ENCODE measurements at regions of chr5 and their contacts with region 1.

Region 1: GRCh38 chr5:74316064-74316679 is 324.4 kb downstream of the ENC1 start:
- DNase-seq: peak; percentile 88
- H3K4me3 Mint-ChIP-seq: no peak overlapping the region
- H3K27ac Mint-ChIP-seq: peak overlapping the region; percentile 97
- H3K4me1 Mint-ChIP-seq: peaks cover 35% of the 10 kb centered on the region
- H3K27me3 Mint-ChIP-seq: no peaks in the 10 kb centered on the region
- CTCF ChIP-seq: no peak

Region 2: DNA sequence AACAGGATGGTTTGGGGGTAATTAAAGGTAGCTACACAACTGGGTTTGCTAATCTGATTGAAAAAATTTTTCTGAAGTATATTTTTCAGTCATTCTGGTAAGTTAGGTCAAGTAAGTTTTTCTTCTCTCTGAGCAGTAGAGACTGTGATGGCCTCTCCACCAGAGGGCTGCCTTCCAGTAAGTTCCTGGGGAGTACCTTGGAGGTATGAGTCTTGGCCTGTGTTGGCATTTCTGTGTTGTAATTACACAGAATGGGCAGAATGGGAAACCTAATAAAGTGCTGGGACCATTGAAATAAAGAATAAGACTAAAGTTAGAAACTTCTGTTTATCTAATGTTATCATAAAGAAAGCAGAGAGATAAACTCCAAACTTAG is 259.4 kb before region 1 on chr5:
- CTCF ChIA-PET with region 1: no interaction called
- POLR2A ChIA-PET with region 1: no interaction called
- intact Hi-C with region 1: loop called (anchors 10 kb)
- DNase-seq: peak; percentile 52
- H3K4me3 Mint-ChIP-seq: no peak overlapping the region
- H3K27ac Mint-ChIP-seq: no peak overlapping the region
- H3K4me1 Mint-ChIP-seq: peaks cover 10% of the 10 kb centered on the region
- H3K27me3 Mint-ChIP-seq: no peaks in the 10 kb centered on the region
- CTCF ChIP-seq: peak; percentile 45

Region 3: GRCh38 chr5:74251141-74252035 is 64.8 kb before region 1 on chr5:
- CTCF ChIA-PET with region 1: no interaction called
- POLR2A ChIA-PET with region 1: interaction called, 3 read pairs
- intact Hi-C with region 1: loop called (anchors 10 kb)
- DNase-seq: peak; percentile 94
- H3K4me3 Mint-ChIP-seq: no peak overlapping the region
- H3K27ac Mint-ChIP-seq: peak overlapping the region; percentile 82
- H3K4me1 Mint-ChIP-seq: peaks cover 22% of the 10 kb centered on the region
- H3K27me3 Mint-ChIP-seq: no peaks in the 10 kb centered on the region
- CTCF ChIP-seq: no peak

Region 4: DNA sequence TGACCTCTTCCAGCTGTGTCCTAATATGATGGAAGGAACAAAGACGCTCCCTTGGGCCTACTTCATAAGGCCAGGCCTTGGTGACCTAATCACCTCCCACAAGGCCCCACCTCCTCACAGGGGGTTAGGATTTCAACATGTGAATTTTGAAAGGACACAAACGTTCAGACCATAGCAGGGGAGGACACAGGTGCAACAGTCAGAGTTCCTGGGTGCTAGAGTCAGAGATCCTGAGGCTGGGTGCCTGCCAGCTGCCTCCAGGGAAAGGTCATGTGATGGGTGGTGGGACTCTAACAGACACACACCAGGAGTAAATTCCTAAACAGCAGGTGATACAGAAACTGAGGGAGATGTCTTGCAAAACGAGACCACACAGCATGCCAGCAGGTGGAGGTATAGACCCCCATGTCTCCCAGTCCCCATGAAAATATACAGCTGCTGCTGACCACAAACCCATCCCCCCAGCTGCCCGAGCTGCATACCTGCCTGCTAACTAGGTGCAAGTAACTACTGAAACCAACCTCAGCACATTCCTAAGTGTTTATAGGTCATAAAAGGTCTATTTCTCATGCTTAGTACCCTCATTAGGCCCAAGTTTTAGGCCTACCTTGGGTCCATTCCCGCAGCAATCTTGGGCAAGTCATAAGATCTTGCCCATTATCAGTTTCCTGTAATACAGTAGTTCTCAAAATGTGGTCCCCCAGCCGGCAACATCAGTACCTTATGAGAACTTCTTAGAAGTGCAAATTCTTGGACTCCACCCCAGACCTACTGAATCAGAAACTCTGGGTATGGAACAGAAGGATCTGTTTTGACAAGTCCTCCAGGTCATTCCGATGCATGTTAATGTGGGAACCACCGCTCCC is 79.0 kb after region 1 on chr5:
- CTCF ChIA-PET with region 1: no interaction called
- POLR2A ChIA-PET with region 1: no interaction called
- intact Hi-C with region 1: loop called (anchors 10 kb)
- DNase-seq: peak; percentile 86
- H3K4me3 Mint-ChIP-seq: no peak overlapping the region
- H3K27ac Mint-ChIP-seq: peak overlapping the region; percentile 73
- H3K4me1 Mint-ChIP-seq: peaks cover 36% of the 10 kb centered on the region
- H3K27me3 Mint-ChIP-seq: no peaks in the 10 kb centered on the region
- CTCF ChIP-seq: no peak

Region 5: DNA sequence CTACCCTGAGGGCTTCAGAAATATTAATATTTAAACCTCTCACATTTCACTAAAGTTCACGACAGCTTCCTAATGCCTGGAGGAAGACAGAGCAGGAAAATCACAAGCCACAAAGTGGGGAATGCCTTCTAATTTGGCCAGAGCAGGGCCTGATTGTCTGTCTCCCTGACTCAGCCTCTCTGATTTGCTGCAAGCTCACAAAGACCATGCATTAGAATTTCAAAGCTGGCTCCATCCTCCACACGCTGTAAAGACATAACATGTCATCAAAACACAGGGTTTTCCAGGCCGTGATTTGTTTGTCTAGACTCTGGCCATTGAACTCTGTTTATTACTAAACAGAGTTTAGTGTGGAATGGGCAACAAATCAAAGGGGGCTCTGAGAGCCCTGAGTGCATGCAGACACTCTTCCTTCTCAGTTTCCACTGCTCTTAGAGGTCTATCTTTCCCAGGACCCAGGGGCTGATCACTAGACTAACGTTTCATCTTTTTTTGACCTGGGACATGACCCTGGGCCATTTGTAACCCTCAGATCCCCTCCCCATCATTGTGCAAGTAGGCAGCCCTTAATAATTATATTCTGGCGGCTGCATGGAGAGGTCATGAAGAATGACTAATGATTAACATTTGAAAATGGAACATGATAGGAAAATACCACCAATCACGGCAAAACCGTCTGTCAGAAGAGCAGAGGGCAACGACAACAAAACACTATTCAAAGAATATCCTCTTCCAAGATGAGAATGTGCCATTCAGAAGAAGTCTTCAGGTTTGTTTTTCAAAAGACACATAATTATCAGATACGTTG is 184.1 kb after region 1 on chr5:
- CTCF ChIA-PET with region 1: no interaction called
- POLR2A ChIA-PET with region 1: no interaction called
- intact Hi-C with region 1: no loop called
- DNase-seq: no peak
- H3K4me3 Mint-ChIP-seq: no peak overlapping the region
- H3K27ac Mint-ChIP-seq: no peak overlapping the region
- H3K4me1 Mint-ChIP-seq: no peaks in the 10 kb centered on the region
- H3K27me3 Mint-ChIP-seq: no peaks in the 10 kb centered on the region
- CTCF ChIP-seq: no peak

Region 6: GRCh38 chr5:74786867-74787266 is 470.7 kb after region 1 on chr5:
- CTCF ChIA-PET with region 1: no interaction called
- POLR2A ChIA-PET with region 1: no interaction called
- intact Hi-C with region 1: no loop called
- DNase-seq: no peak
- H3K4me3 Mint-ChIP-seq: no peak overlapping the region
- H3K27ac Mint-ChIP-seq: no peak overlapping the region
- H3K4me1 Mint-ChIP-seq: no peaks in the 10 kb centered on the region
- H3K27me3 Mint-ChIP-seq: no peaks in the 10 kb centered on the region
- CTCF ChIP-seq: no peak